ENCODE measurements at regions of chr10 and their contacts with region 1.

Region 1: DNA sequence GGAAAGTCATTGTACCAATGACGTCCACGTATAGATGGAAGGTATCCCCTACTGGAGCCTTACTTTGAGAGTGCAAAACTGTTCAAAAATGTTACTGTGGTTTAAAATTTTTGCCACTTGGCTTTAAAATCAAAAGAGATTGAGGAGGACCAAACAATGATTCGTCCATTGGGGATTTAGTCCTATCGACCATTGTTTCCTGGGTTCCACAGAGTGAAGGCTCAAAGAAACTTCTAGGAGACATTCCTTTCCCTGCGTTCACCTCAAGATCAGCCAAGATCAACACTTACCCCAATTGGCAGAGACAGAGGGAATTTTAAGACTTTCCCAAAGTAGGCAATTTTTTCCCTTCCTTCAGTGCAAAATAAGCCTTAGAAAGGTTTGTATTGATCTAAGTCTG is 152.3 kb downstream of the NEBL start:
- DNase-seq: no peak
- H3K4me3 ChIP-seq: no peak overlapping the region
- H3K27ac ChIP-seq: no peak overlapping the region
- H3K4me1 ChIP-seq: peaks cover 11% of the 10 kb centered on the region
- H3K27me3 ChIP-seq: no peaks in the 10 kb centered on the region
- CTCF ChIP-seq: no peak

Region 2: GRCh38 chr10:20144268-20144667 is 600.6 kb before region 1 on chr10:
- CTCF ChIA-PET with region 1: no interaction called
- POLR2A ChIA-PET with region 1: no interaction called
- intact Hi-C with region 1: no loop called
- DNase-seq: no peak
- H3K4me3 ChIP-seq: no peak overlapping the region
- H3K27ac ChIP-seq: no peak overlapping the region
- H3K4me1 ChIP-seq: peaks cover 31% of the 10 kb centered on the region
- H3K27me3 ChIP-seq: no peaks in the 10 kb centered on the region
- CTCF ChIP-seq: no peak

Region 3: GRCh38 chr10:20698837-20699236 is 46.0 kb before region 1 on chr10:
- CTCF ChIA-PET with region 1: no interaction called
- POLR2A ChIA-PET with region 1: no interaction called
- intact Hi-C with region 1: no loop called
- DNase-seq: no peak
- H3K4me3 ChIP-seq: no peak overlapping the region
- H3K27ac ChIP-seq: no peak overlapping the region
- H3K4me1 ChIP-seq: no peaks in the 10 kb centered on the region
- H3K27me3 ChIP-seq: no peaks in the 10 kb centered on the region
- CTCF ChIP-seq: no peak

Region 4: DNA sequence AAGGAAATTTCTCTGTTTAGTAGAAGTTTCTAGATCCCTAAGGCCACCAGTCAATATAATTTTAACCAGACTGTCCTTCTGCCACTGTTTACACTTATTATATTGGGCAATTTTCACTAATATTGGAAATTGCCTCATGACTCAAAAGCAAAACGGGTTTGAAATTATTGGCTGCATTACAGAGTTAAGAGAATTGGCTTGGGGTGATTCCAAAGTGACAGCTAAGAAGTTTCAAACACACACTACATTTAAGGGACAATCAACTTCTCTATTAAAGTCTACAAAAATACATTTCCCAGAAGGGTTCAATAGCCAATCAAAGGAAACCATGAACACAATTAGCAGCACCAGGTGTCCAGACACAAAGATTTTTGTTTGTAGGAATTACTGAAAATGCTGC is 40.4 kb after region 1 on chr10:
- CTCF ChIA-PET with region 1: no interaction called
- POLR2A ChIA-PET with region 1: no interaction called
- intact Hi-C with region 1: loop called (anchors 5 kb)
- DNase-seq: no peak
- H3K4me3 ChIP-seq: no peak overlapping the region
- H3K27ac ChIP-seq: no peak overlapping the region
- H3K4me1 ChIP-seq: no peaks in the 10 kb centered on the region
- H3K27me3 ChIP-seq: no peaks in the 10 kb centered on the region
- CTCF ChIP-seq: no peak

Measured in A673 (cell line).